WTC11 (cell line): ENCODE measurements at regions of chr2 and their contacts with region 1.

Region 1: GRCh38 chr2:174465327-174465726 is 21.5 kb downstream of the GPR155 start:
- DNase-seq: peak; percentile 56
- ATAC-seq: peak; percentile 97
- H3K4me3 Mint-ChIP-seq: no peak overlapping the region
- H3K27ac Mint-ChIP-seq: no peak overlapping the region
- H3K4me1 Mint-ChIP-seq: no peaks in the 10 kb centered on the region
- H3K27me3 Mint-ChIP-seq: peaks cover 11% of the 10 kb centered on the region
- CTCF ChIP-seq: no peak

Region 2: GRCh38 chr2:174395284-174395968 is 69.9 kb before region 1 on chr2 and contains the start of gene SCRN3:
- CTCF ChIA-PET with region 1: interaction called, 10 read pairs
- POLR2A ChIA-PET with region 1: no interaction called
- DNase-seq: peak; percentile 93
- ATAC-seq: peak; percentile 99
- H3K4me3 Mint-ChIP-seq: peak within 1 kb of the TSS; percentile 97
- H3K27ac Mint-ChIP-seq: peak within 1 kb of the TSS; percentile 98
- H3K4me1 Mint-ChIP-seq: peaks cover 11% of the 10 kb centered on the region
- H3K27me3 Mint-ChIP-seq: no peaks in the 10 kb centered on the region
- CTCF ChIP-seq: no peak
- total RNA-seq, gene SCRN3: 8.0 to 13.0 TPM (median 11.3 TPM) in 3 replicates

Region 3: GRCh38 chr2:174445248-174445647 is 20.1 kb before region 1 on chr2:
- CTCF ChIA-PET with region 1: interaction called, 17 read pairs
- POLR2A ChIA-PET with region 1: no interaction called
- DNase-seq: no peak
- ATAC-seq: no peak
- H3K4me3 Mint-ChIP-seq: no peak overlapping the region
- H3K27ac Mint-ChIP-seq: no peak overlapping the region
- H3K4me1 Mint-ChIP-seq: peaks cover 11% of the 10 kb centered on the region
- H3K27me3 Mint-ChIP-seq: no peaks in the 10 kb centered on the region
- CTCF ChIP-seq: no peak

Region 4: DNA sequence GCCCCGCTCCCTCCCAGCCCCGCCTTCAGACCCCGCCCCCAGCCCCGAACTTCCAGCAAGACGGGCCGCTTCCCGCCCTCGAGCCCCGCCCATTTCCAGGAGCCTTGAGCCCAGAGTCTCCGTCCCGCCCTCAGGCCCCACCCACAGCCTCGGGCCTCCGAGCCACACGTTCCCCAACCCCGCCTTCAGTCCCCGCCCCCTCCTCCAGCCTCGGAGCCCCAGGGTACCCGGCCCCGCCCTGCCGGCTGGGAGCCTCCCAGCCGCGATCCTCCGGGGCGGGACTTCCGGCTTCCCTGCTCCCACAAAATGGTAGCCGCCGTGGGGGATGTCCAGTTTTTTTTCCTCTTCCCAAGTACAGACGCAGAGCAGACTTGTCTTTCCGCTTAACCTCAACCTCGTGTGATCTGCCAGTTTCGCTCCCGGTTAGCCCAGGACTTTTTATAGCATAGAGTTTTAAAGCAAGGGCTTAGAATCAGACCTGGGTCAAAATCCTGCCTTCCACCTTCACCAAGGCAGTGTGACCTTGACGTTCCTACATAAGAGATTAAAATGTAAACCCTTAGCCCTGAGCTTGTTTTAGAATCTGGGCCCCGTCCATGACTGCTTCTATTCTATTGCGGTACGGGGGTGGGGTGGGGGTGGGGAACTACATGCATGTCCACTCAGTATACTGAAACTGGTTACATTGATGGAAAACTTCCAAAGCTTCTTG is 21.9 kb after region 1 on chr2:
- CTCF ChIA-PET with region 1: interaction called, 15 read pairs
- POLR2A ChIA-PET with region 1: no interaction called
- DNase-seq: peak; percentile 100
- ATAC-seq: peak; percentile 98
- H3K4me3 Mint-ChIP-seq: peak overlapping the region; percentile 86
- H3K27ac Mint-ChIP-seq: peak overlapping the region; percentile 92
- H3K4me1 Mint-ChIP-seq: peaks cover 7% of the 10 kb centered on the region
- H3K27me3 Mint-ChIP-seq: peaks cover 45% of the 10 kb centered on the region
- CTCF ChIP-seq: no peak

Region 5: GRCh38 chr2:174536304-174536703 is 71.0 kb after region 1 on chr2:
- CTCF ChIA-PET with region 1: interaction called, 12 read pairs
- POLR2A ChIA-PET with region 1: no interaction called
- DNase-seq: no peak
- ATAC-seq: no peak
- H3K4me3 Mint-ChIP-seq: no peak overlapping the region
- H3K27ac Mint-ChIP-seq: no peak overlapping the region
- H3K4me1 Mint-ChIP-seq: no peaks in the 10 kb centered on the region
- H3K27me3 Mint-ChIP-seq: no peaks in the 10 kb centered on the region; the same call in 1 of the 2 replicates
- CTCF ChIP-seq: no peak

Region 6: DNA sequence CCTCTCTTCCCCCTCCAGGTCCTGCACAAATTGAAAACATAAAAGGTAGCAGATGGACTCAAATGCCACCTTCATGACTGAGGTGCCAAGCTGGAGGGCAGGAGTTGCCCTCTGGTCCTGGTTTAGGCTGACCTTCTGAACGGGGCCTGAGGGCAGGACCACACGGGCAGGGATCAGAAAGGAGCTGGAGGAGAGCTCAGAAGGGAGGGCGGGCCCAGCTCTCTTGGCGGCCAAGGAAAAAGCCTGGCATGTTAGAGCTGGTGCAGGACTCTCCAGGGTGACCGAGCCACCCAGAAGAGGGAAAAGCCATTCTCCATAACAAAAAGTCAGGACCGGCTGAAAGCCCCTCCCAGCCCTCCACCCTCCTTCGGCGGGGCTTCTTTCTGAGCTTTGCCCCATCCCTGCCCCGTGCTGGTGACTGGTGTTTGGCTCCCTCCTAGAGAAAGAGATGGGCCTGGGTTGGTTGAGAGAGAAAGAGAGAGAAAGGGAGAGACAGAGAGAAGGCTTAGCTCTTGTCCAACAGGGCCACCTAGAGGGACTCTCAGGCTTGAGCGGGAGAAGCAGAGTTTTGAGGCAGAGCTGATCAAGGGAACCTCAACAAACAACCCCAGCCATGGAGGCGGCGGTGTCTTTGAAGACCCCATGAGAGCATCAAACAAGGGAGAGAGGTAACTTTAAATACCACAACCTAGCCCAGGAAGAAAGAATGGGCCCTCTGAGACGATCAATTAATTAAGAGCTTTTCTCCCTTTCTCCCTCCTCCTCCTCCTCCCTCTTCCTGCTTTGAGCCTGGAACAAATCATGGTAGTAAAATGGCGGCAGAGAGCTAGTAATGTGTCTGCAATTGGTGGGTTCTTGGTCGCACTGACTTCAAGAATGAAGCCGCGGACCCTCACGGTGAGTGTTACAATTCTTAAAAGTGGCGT is 81.5 kb after region 1 on chr2:
- CTCF ChIA-PET with region 1: interaction called, 113 read pairs
- POLR2A ChIA-PET with region 1: interaction called, 4 read pairs
- DNase-seq: peak; percentile 64
- ATAC-seq: peak; percentile 99
- H3K4me3 Mint-ChIP-seq: no peak overlapping the region; the same call in 1 of the 2 replicates
- H3K27ac Mint-ChIP-seq: no peak overlapping the region
- H3K4me1 Mint-ChIP-seq: peaks cover 9% of the 10 kb centered on the region
- H3K27me3 Mint-ChIP-seq: no peaks in the 10 kb centered on the region; the same call in 1 of the 2 replicates
- CTCF ChIP-seq: no peak

Region 7: GRCh38 chr2:174603280-174603679 is 138.0 kb after region 1 on chr2:
- CTCF ChIA-PET with region 1: interaction called, 12 read pairs
- POLR2A ChIA-PET with region 1: no interaction called
- DNase-seq: peak; percentile 28
- ATAC-seq: peak; percentile 85
- H3K4me3 Mint-ChIP-seq: no peak overlapping the region
- H3K27ac Mint-ChIP-seq: no peak overlapping the region
- H3K4me1 Mint-ChIP-seq: no peaks in the 10 kb centered on the region
- H3K27me3 Mint-ChIP-seq: no peaks in the 10 kb centered on the region
- CTCF ChIP-seq: no peak